ENCODE measurements at regions of chr11 and their contacts with region 1.

Region 1: GRCh38 chr11:6315811-6316425 is 4.4 kb downstream of the CAVIN3 start:
- DNase-seq: peak; percentile 44
- H3K4me3 Mint-ChIP-seq: no peak overlapping the region
- H3K27ac Mint-ChIP-seq: no peak overlapping the region
- H3K4me1 Mint-ChIP-seq: peaks cover 13% of the 10 kb centered on the region
- H3K27me3 Mint-ChIP-seq: peaks cover 63% of the 10 kb centered on the region

Region 2: GRCh38 chr11:6251120-6251733 is 64.7 kb before region 1 on chr11:
- CTCF ChIA-PET with region 1: interaction called, 63 read pairs
- DNase-seq: peak; percentile 67
- H3K4me3 Mint-ChIP-seq: no peak overlapping the region
- H3K27ac Mint-ChIP-seq: no peak overlapping the region
- H3K4me1 Mint-ChIP-seq: no peaks in the 10 kb centered on the region
- H3K27me3 Mint-ChIP-seq: peaks cover 23% of the 10 kb centered on the region

Region 3: DNA sequence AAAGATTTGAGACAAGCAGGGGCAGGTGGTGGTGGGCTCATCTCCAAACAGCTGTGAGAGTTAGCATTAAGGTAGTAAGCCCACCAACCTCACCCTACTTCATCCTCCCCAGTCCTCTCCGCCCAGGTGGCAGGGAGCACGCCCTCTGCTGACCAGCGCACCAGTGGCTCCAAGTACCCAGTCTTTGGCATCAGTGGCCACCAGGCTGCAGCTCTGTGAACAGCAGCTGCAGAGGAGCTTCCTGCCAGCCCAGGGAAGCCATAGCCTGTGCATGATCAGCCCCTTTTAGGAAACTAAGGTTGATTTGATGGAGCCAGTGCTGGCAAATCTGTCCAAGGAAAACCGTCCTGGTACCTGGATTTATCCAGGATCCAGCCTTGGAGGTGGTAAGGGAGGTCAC is 17.3 kb before region 1 on chr11:
- CTCF ChIA-PET with region 1: interaction called, 14 read pairs
- DNase-seq: no peak
- H3K4me3 Mint-ChIP-seq: no peak overlapping the region
- H3K27ac Mint-ChIP-seq: no peak overlapping the region
- H3K4me1 Mint-ChIP-seq: no peaks in the 10 kb centered on the region
- H3K27me3 Mint-ChIP-seq: peaks cover 21% of the 10 kb centered on the region

Measured in activated naive CD4-positive, alpha-beta T cell treated with anti-CD3 and anti-CD28 coated beads, Interleukin-2, amount 10 ng/mL, durations not matched to agents 7 days and 5 days (primary cell).